WTC11 (cell line): ENCODE measurements at regions of chr17 and their contacts with region 1.

Region 1: DNA sequence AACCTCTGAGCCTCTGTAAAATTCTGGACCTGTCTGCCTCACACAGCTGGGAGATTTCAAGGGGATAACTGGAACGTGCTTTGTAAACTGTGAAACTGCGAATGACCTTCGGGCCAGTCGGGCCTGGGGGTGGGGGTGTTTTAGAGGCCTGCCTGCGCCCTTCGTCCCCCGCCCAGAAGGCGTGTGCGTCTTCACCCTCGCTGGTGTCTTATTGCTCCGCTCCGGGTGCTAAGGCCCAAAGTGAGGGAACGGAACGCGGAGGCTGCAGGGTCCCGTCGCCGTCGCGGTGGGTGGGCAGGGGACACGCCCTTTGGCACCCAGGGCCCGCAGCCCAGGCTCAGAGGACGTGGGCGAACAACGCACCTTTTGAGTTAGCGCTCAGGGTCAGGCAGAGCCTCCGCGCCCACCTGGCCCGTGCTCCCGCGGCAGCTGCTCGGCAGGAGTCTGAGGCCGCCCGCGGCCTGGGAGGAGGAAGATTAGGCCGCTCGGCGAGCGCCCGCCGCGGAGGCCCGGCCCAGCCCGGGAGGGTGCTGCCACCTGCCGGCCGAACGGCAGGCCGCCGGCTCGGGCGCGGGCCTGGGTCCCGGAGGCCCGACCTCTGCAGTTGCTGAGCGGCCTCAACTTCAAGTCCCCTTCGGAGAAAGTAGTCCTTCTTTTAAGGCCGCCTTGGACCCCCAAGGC is 29.7 kb downstream of the DCAKD start:
- DNase-seq: peak; percentile 72
- ATAC-seq: peak; percentile 62
- H3K4me3 Mint-ChIP-seq: peak overlapping the region; percentile 66
- H3K27ac Mint-ChIP-seq: no peak overlapping the region
- H3K4me1 Mint-ChIP-seq: peaks cover 28% of the 10 kb centered on the region
- H3K27me3 Mint-ChIP-seq: peaks cover 42% of the 10 kb centered on the region
- CTCF ChIP-seq: peak; percentile 85

Region 2: DNA sequence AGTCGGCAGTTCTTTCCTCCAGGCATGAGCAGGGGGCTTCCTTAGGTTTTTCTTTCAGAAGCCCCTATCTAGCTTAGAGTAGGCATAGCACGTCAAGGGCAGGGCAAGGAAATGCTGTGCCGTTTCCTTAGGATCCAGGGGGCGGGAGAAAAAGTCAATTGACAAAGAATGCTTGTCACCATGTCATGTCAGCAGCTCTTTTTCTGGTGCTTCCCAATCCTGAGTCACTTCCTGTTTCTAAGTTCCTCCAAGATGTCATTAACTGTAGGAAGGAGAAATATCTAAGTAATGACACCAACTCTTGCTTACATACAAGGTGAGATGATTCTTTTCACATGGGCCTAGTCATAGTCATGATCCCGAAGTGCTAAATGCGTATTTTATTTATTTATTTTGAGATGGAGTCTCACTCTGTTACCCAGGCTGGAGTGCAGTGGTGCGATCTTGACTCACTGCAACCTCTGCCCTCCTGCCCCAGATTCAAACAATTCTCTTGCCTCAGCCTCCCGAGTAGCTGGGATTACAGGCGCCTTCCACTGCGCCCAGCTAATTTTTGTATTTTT is 226.8 kb before region 1 on chr17:
- CTCF ChIA-PET with region 1: no interaction called
- POLR2A ChIA-PET with region 1: no interaction called
- DNase-seq: no peak
- ATAC-seq: no peak; the same call in 1 of the 2 replicates
- H3K4me3 Mint-ChIP-seq: no peak overlapping the region
- H3K27ac Mint-ChIP-seq: peak overlapping the region; percentile 70
- H3K4me1 Mint-ChIP-seq: peaks cover 22% of the 10 kb centered on the region
- H3K27me3 Mint-ChIP-seq: no peaks in the 10 kb centered on the region
- CTCF ChIP-seq: no peak

Region 3: GRCh38 chr17:44864866-44865660 is 156.7 kb before region 1 on chr17:
- CTCF ChIA-PET with region 1: no interaction called
- POLR2A ChIA-PET with region 1: no interaction called
- DNase-seq: peak; percentile 70
- ATAC-seq: peak; percentile 87
- H3K4me3 Mint-ChIP-seq: no peak overlapping the region
- H3K27ac Mint-ChIP-seq: no peak overlapping the region
- H3K4me1 Mint-ChIP-seq: no peaks in the 10 kb centered on the region
- H3K27me3 Mint-ChIP-seq: no peaks in the 10 kb centered on the region
- CTCF ChIP-seq: peak; percentile 88

Region 4: DNA sequence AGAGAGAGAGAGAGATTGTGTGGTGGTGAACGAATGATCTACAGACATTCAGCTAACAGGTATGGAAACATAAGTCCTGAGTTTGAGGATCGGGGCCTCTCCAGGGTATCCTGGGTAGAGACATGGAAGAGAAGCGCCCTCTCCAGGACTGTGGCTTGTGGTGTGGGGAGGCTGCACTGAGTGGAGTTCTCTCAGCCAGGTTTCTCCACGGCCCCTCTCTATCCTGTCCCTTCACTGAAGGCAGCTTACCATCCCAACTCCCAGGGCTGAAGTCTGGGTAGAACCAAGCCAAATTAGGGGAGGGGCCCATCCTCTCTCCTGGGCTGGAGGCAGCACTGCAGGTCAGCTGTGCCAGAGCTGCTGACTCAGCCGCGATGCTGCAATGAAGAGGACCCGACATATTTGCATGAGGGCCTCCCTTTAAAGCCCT is 59.8 kb before region 1 on chr17:
- CTCF ChIA-PET with region 1: interaction called, 43 read pairs
- POLR2A ChIA-PET with region 1: no interaction called
- DNase-seq: peak; percentile 54
- ATAC-seq: peak; percentile 85
- H3K4me3 Mint-ChIP-seq: no peak overlapping the region
- H3K27ac Mint-ChIP-seq: no peak overlapping the region
- H3K4me1 Mint-ChIP-seq: peaks cover 12% of the 10 kb centered on the region
- H3K27me3 Mint-ChIP-seq: peaks cover 58% of the 10 kb centered on the region
- CTCF ChIP-seq: no peak

Region 5: GRCh38 chr17:44988044-44988942 is 33.5 kb before region 1 on chr17:
- CTCF ChIA-PET with region 1: interaction called, 24 read pairs
- POLR2A ChIA-PET with region 1: interaction called, 6 read pairs
- DNase-seq: peak; percentile 33
- ATAC-seq: peak; percentile 4
- H3K4me3 Mint-ChIP-seq: peak overlapping the region; percentile 67
- H3K27ac Mint-ChIP-seq: peak overlapping the region; percentile 79
- H3K4me1 Mint-ChIP-seq: peaks cover 34% of the 10 kb centered on the region
- H3K27me3 Mint-ChIP-seq: peaks cover 9% of the 10 kb centered on the region
- CTCF ChIP-seq: no peak

Region 6: DNA sequence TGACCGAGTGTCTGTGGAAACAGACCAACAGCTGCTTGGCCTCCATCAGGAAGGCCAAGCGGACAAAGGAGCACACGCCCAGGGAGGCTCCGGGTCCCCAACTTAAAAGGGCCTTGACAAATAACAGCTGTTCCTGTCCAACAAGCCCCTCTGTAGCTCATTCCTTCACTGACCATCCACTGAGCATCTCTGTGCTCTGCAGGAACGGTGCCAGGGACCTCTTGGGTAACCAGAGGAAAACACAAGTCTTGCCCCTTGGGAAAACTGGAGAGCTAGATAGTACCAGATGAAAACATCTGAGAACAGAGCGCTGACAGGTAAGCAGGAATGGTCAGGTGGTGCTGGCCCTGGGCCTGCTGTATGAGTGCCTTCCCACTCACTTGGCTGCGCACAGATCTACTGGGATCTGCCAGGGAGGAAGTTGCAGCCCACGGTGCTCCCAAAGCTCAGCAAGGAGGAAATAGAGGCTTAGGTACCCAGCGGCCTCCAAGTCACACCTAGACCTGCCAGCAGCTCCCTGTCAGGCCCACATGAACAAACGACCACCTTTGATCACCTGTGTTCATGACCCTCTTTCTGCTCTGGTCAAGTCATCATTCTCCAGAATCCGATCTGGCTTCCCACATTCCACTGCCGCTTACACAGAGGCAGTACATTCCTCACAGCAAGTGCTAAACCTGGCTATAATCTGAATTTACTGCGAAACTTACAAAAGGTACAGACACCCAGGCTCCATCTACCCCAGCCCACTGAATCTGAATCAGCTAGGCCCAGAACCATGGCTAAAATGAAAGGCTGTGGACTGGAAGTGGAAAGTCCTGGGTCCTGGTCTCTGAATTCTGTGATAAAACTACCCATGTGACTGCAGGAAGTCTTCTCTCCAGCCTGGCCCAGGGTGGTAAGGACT is 17.2 kb after region 1 on chr17:
- CTCF ChIA-PET with region 1: interaction called, 24 read pairs
- POLR2A ChIA-PET with region 1: interaction called, 4 read pairs
- DNase-seq: no peak
- ATAC-seq: no peak
- H3K4me3 Mint-ChIP-seq: no peak overlapping the region
- H3K27ac Mint-ChIP-seq: peak overlapping the region; percentile 88
- H3K4me1 Mint-ChIP-seq: peaks cover 34% of the 10 kb centered on the region
- H3K27me3 Mint-ChIP-seq: no peaks in the 10 kb centered on the region
- CTCF ChIP-seq: no peak

Region 7: DNA sequence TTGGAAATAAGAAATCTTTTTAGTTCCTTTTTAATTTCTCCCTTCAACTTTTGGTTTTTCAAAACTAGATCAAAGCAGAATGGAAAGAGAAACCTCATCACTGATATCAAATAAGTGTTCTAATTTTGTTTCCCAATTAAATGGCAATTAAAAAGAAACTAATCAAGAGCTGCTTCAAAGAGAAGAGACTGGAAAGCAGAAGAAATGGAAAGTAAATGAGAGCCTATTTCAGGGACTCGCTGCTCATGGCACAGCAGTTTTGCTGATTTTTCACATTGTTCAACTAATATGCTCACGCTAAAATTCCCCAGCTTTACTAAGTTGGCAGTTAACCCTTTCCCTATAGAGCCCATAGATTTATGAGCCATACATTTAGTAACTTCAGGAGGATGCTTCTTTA is 45.9 kb after region 1 on chr17:
- CTCF ChIA-PET with region 1: no interaction called
- POLR2A ChIA-PET with region 1: no interaction called
- DNase-seq: no peak
- ATAC-seq: no peak
- H3K4me3 Mint-ChIP-seq: no peak overlapping the region
- H3K27ac Mint-ChIP-seq: no peak overlapping the region; the same call in 1 of the 2 replicates
- H3K4me1 Mint-ChIP-seq: no peaks in the 10 kb centered on the region
- H3K27me3 Mint-ChIP-seq: no peaks in the 10 kb centered on the region
- CTCF ChIP-seq: no peak

Region 8: GRCh38 chr17:45228763-45229539 is 207.2 kb after region 1 on chr17:
- CTCF ChIA-PET with region 1: no interaction called
- POLR2A ChIA-PET with region 1: no interaction called
- DNase-seq: peak; percentile 59
- ATAC-seq: peak; percentile 27
- H3K4me3 Mint-ChIP-seq: no peak overlapping the region
- H3K27ac Mint-ChIP-seq: no peak overlapping the region
- H3K4me1 Mint-ChIP-seq: peaks cover 20% of the 10 kb centered on the region
- H3K27me3 Mint-ChIP-seq: peaks cover 26% of the 10 kb centered on the region
- CTCF ChIP-seq: no peak